OCI-LY7 (cell line): ENCODE measurements at regions of chr10 and their contacts with region 1.

Region 1: GRCh38 chr10:93680412-93681047 is 21.9 kb downstream of the FRA10AC1 start:
- DNase-seq: peak; percentile 70
- H3K4me3 ChIP-seq: no peak overlapping the region
- H3K27ac ChIP-seq: no peak overlapping the region
- H3K4me1 ChIP-seq: peaks cover 28% of the 10 kb centered on the region
- CTCF ChIP-seq: peak; percentile 87

Region 2: GRCh38 chr10:93376372-93377293 is 303.9 kb before region 1 on chr10:
- CTCF ChIA-PET with region 1: no interaction called
- POLR2A ChIA-PET with region 1: interaction called, 3 read pairs
- intact Hi-C with region 1: loop called (anchors 2 kb)
- DNase-seq: peak; percentile 69
- H3K4me3 ChIP-seq: no peak overlapping the region
- H3K27ac ChIP-seq: no peak overlapping the region
- H3K4me1 ChIP-seq: no peaks in the 10 kb centered on the region
- CTCF ChIP-seq: peak; percentile 95

Region 3: DNA sequence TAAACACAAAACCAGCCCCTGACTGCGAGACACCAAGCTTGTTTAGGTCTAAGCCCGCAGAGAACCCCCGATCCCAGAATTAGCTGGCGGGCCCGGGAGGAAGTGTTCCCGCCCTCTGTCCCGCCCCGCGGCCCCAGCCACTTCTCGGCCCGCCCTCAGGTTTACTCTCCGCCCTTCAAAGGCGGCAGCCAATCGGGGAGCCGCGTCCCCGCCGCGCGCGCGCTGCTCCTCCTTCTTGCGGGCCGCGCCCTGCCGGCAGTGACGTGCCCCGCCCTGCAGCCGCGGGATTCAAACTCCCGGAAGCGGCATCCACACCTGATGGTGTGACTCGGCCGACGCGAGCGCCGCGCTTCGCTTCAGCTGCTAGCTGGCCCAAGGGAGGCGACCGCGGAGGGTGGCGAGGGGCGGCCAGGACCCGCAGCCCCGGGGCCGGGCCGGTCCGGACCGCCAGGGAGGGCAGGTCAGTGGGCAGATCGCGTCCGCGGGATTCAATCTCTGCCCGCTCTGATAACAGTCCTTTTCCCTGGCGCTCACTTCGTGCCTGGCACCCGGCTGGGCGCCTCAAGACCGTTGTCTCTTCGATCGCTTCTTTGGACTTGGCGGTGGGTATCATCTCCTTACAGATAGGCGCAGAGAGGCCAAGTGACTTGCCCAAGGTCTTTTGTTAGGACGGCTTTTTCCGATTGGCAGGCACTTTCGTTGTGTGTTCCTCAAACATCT is 184.0 kb before region 1 on chr10 and contains the start of gene CEP55:
- CTCF ChIA-PET with region 1: no interaction called
- POLR2A ChIA-PET with region 1: no interaction called
- intact Hi-C with region 1: loop called (anchors 5 kb)
- DNase-seq: peak; percentile 96
- H3K4me3 ChIP-seq: peak within 1 kb of the TSS; percentile 97
- H3K27ac ChIP-seq: peak within 1 kb of the TSS; percentile 73
- H3K4me1 ChIP-seq: peaks cover 42% of the 10 kb centered on the region
- CTCF ChIP-seq: no peak
- total RNA-seq, gene CEP55: 64.5 and 83.0 TPM in 2 replicates

Region 4: DNA sequence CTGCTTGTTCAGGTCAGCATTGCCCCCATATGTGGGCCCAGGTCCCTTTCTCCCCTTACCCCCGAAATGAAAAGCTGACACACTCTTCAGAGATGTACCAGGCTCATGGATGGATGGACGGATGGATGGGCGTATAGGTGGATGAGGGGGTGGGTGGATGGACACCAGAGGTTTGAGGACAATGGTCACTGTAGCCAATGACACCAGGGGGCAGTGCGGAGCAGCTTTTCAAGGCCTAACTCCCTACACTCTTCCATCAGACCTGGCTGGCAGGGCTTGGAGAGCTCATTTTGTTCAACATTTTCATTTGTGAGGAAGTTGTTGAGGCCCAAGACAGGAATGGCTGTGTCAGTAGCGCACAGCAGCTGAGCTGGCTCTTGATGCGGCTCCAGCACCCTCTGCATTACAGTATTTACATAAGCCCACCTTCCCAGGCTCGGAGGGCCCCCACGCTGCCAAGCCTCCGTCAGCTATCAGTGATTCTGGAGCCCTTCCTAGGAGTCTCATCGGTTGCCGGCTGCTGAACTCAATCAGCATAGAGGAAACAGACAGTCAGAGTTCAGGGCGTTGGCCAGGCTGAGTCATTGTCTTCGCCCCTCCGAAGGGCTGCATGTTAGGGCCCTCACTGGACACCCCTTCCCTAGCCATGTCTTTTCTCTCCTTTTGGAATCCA is 125.6 kb before region 1 on chr10:
- CTCF ChIA-PET with region 1: interaction called, 32 read pairs
- POLR2A ChIA-PET with region 1: interaction called, 9 read pairs
- intact Hi-C with region 1: loop called (anchors 1 kb)
- DNase-seq: peak; percentile 77
- H3K4me3 ChIP-seq: no peak overlapping the region
- H3K27ac ChIP-seq: no peak overlapping the region
- H3K4me1 ChIP-seq: peaks cover 15% of the 10 kb centered on the region
- CTCF ChIP-seq: peak; percentile 87

Region 5: DNA sequence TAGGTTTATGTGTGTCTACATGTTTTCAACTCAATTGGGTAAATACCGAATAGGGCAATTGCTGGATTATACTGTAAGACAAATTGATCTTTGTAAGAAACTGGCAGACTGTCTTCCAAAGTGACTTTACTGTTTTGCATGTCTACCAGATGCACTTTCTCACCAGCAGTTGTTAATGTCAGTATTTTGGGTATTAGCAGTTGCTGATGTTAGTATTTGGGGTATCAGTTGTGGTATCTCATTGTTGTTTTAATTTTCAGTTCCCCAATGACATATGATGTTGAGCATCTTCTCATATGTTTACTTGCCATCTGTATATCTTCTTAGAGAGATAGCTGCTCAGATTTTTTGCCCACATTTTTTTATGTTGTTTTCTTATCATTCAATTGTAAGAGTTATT is 57.6 kb before region 1 on chr10:
- CTCF ChIA-PET with region 1: no interaction called
- POLR2A ChIA-PET with region 1: interaction called, 3 read pairs
- intact Hi-C with region 1: loop called (anchors 5 kb)
- DNase-seq: peak; percentile 67
- H3K4me3 ChIP-seq: peak overlapping the region; percentile 44
- H3K27ac ChIP-seq: peak overlapping the region; percentile 96
- H3K4me1 ChIP-seq: peaks cover 88% of the 10 kb centered on the region
- CTCF ChIP-seq: no peak

Region 6: DNA sequence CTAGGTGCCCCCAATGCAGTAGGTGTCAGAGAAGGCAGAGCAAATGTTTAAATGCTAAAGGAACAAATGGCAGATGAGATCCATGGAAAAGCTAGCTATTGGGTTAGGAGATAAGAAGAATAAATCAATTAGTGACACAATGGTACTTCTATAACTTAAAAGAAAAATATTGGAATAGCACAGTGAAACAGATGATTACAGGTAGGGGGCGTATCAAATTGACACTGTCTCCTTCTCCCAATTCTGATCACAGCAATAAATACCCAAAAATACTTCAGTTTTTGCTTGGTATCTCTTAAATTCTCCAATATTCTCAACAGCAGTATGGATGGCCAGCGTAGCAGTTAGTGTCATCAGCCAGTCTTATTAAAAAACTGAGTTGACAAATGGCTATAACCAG is 16.7 kb after region 1 on chr10:
- CTCF ChIA-PET with region 1: no interaction called
- POLR2A ChIA-PET with region 1: interaction called, 11 read pairs
- intact Hi-C with region 1: no loop called
- DNase-seq: no peak
- H3K4me3 ChIP-seq: no peak overlapping the region
- H3K27ac ChIP-seq: no peak overlapping the region
- H3K4me1 ChIP-seq: peaks cover 19% of the 10 kb centered on the region
- CTCF ChIP-seq: peak; percentile 72

Region 7: DNA sequence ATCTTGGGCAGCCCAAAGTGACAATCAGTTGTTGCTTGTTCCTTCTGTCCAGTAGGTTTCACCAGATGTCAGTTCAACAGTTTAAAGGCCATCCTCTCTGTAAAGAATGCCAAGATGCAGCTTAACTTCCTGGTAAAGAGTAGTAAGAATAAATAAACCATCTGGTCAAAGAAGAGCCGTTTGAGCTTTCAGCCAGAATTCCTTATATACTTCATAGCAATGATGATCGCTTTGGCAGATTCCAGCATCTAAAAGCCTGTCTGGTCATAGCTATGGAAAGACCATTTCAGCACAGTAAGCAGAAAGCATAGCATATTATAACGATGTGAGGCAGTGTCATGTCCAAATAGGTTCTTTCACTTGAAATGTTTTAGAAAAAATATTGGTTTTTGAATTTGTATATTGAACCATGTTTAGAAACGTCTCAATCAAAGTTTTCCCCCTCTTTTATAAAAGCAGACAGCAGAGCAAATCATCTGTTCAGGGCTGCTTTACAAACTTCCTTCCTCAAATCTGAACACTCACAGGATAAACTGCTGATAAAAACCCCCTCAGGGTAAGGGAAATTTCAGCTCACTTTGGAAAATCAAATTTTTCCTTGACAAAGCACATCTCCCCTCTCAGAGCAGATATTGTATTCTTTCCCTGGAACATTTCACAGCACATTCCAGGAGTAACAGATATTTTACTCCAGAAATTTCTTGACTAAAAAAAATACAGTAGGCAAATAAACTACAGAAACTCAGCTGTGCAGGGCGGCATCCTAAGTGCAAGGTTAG is 498.1 kb after region 1 on chr10:
- CTCF ChIA-PET with region 1: no interaction called
- POLR2A ChIA-PET with region 1: no interaction called
- intact Hi-C with region 1: no loop called
- DNase-seq: no peak
- H3K4me3 ChIP-seq: no peak overlapping the region
- H3K27ac ChIP-seq: no peak overlapping the region
- H3K4me1 ChIP-seq: no peaks in the 10 kb centered on the region
- CTCF ChIP-seq: no peak